Naive thymus-derived CD4-positive, alpha-beta T cell (primary cell): ENCODE measurements at regions of chr2 and their contacts with region 1.

Region 1: DNA sequence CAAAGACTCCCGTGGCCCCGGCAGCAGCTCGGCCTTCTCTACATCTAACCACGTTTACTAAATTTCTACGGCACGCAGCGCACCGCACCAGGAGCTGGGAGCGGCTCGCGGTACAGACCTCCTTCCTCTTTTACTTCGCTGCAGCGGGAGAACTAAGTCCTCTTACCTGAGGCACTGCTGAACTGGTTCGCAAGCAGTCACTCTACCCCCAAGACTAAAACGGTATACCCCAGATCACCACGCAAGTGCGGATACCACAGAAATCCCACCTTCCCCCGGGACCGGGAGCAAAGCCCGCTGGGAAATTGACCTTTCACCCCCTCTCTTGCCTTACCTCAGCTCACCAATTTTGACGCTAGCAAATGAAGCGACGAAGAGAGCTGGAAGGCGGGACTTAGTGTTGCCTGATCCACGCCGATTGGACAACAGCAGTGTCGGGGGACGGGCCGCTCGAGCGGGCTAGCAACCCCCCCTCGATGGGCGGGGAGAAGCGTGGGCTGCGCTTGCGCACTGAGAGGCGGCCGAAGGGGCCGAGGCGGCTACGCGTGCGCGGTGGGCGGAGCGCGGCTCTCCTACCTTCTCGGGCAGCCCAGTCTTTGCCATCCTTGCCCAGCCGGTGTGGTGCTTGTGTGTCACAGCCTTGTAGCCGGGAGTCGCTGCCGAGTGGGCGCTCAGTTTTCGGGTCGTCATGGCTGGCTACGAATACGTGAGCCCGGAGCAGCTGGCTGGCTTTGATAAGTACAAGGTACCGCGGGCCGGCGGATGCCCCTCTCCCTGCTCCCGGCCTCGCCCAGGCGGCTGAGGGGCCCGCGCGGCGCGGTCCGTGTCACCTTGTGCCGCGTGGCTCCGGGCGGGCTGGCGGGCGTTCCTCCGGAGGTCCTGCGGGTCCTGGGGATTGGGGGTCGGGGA is at the start of gene SELENOI:
- DNase-seq: peak; percentile 99 to 100 (median 99)
- ATAC-seq: peak; percentile 97
- H3K4me3 ChIP-seq: peak within 1 kb of the TSS; percentile 81
- H3K4me3 Mint-ChIP-seq: peak within 1 kb of the TSS; percentile 84 to 100 (median 98)
- H3K27ac ChIP-seq: peak within 1 kb of the TSS; percentile 88
- H3K27ac Mint-ChIP-seq: peak within 1 kb of the TSS; percentile 95 to 100 (median 99)
- H3K4me1 ChIP-seq: peaks cover 24 to 25% of the 10 kb centered on the region in 2 donors
- H3K4me1 Mint-ChIP-seq: peaks cover 28 to 62% (median 40%) of the 10 kb centered on the region in 7 donors
- H3K27me3 ChIP-seq: no peaks in the 10 kb centered on the region
- H3K27me3 Mint-ChIP-seq: no peaks in the 10 kb centered on the region
- total RNA-seq, gene SELENOI: 19.0 to 33.6 (median 22.4) TPM

Region 2: GRCh38 chr2:25673300-25674076 is 672.3 kb before region 1 on chr2 and contains the start of gene DTNB:
- CTCF ChIA-PET with region 1: no interaction called
- POLR2A ChIA-PET with region 1: no interaction called
- intact Hi-C with region 1: loop called (anchors 2 to 5 kb)
- DNase-seq: peak; percentile 68 to 82 (median 79)
- ATAC-seq: peak; percentile 89
- H3K4me3 ChIP-seq: peak within 1 kb of the TSS; percentile 94
- H3K4me3 Mint-ChIP-seq: peak within 1 kb of the TSS; percentile 84 to 90 (median 88)
- H3K27ac ChIP-seq: peak within 1 kb of the TSS; percentile 80
- H3K27ac Mint-ChIP-seq: peak within 1 kb of the TSS; percentile 74 to 92 (median 84)
- H3K4me1 ChIP-seq: peaks cover 12 to 15% of the 10 kb centered on the region in 2 donors
- H3K4me1 Mint-ChIP-seq: peaks cover 15 to 56% (median 37%) of the 10 kb centered on the region in 7 donors
- H3K27me3 ChIP-seq: no peaks in the 10 kb centered on the region
- H3K27me3 Mint-ChIP-seq: peaks cover 0 to 25% (median 0%) of the 10 kb centered on the region in 5 donors
- total RNA-seq, gene DTNB: 32.8 to 56.2 (median 33.8) TPM

Region 3: GRCh38 chr2:26184555-26185303 is 161.1 kb before region 1 on chr2:
- CTCF ChIA-PET with region 1: no interaction called
- POLR2A ChIA-PET with region 1: interaction called, 5 read pairs
- intact Hi-C with region 1: loop called in 1 of 2 experiments (anchors 1 kb)
- DNase-seq: peak; percentile 82 to 91 (median 88)
- ATAC-seq: peak; percentile 98
- H3K4me3 ChIP-seq: peak overlapping the region; percentile 68
- H3K4me3 Mint-ChIP-seq: peak overlapping the region; percentile 79 to 91 (median 85)
- H3K27ac ChIP-seq: peak overlapping the region; percentile 71
- H3K27ac Mint-ChIP-seq: peak overlapping the region in 7 of 9 donors; percentile 25 to 90 (median 67)
- H3K4me1 ChIP-seq: peaks cover 5 to 8% of the 10 kb centered on the region in 2 donors
- H3K4me1 Mint-ChIP-seq: peaks cover 6 to 30% (median 23%) of the 10 kb centered on the region in 7 donors
- H3K27me3 ChIP-seq: no peaks in the 10 kb centered on the region
- H3K27me3 Mint-ChIP-seq: peaks cover 11 to 23% (median 15%) of the 10 kb centered on the region in 5 donors

Region 4: DNA sequence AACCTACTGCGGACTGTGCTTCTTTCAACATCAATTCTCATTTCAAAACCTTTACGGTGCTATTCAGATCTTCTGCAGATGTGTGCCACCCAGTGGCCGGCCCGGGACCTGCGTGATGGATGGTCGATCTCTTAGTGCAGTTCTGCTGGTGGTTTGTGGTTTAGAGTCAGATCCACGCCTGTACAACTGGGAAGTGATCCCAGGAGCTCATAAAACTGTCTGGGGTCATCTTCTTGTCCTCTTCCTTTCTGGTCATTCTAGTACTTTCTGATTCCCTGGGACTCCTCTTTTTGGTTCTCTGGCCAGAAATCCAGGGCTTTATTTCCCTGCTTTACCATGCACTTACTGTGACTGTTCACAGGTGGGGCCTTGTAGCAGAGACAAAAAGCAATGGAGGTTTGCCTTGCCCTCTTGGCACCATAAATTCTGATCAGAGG is 15.7 kb before region 1 on chr2:
- CTCF ChIA-PET with region 1: interaction called, 4 read pairs
- POLR2A ChIA-PET with region 1: interaction called, 4 read pairs
- intact Hi-C with region 1: loop called in 1 of 2 experiments (anchors 1 kb)
- DNase-seq: peak; percentile 62 to 81 (median 76)
- ATAC-seq: peak; percentile 99
- H3K4me3 ChIP-seq: no peak overlapping the region
- H3K4me3 Mint-ChIP-seq: peak overlapping the region in 4 of 10 donors; percentile 6 to 41 (median 19)
- H3K27ac ChIP-seq: no peak overlapping the region
- H3K27ac Mint-ChIP-seq: peak overlapping the region in 3 of 9 donors; percentile 19 to 58 (median 25)
- H3K4me1 ChIP-seq: peaks cover 0 to 6% of the 10 kb centered on the region in 2 donors
- H3K4me1 Mint-ChIP-seq: peaks cover 3 to 19% (median 9%) of the 10 kb centered on the region in 7 donors
- H3K27me3 ChIP-seq: no peaks in the 10 kb centered on the region
- H3K27me3 Mint-ChIP-seq: peaks cover 0 to 4% (median 0%) of the 10 kb centered on the region in 5 donors

Region 5: GRCh38 chr2:26785431-26786206 is 439.8 kb after region 1 on chr2 and contains the start of gene CENPA:
- CTCF ChIA-PET with region 1: no interaction called
- POLR2A ChIA-PET with region 1: no interaction called
- intact Hi-C with region 1: loop called in 1 of 2 experiments (anchors 1 kb)
- DNase-seq: peak; percentile 86 to 98 (median 96)
- ATAC-seq: peak; percentile 100
- H3K4me3 ChIP-seq: peak within 1 kb of the TSS; percentile 78
- H3K4me3 Mint-ChIP-seq: peak within 1 kb of the TSS; percentile 81 to 97 (median 88)
- H3K27ac ChIP-seq: peak within 1 kb of the TSS; percentile 60
- H3K27ac Mint-ChIP-seq: peak within 1 kb of the TSS; percentile 65 to 97 (median 89)
- H3K4me1 ChIP-seq: peaks cover 0 to 4% of the 10 kb centered on the region in 2 donors
- H3K4me1 Mint-ChIP-seq: peaks cover 10 to 34% (median 11%) of the 10 kb centered on the region in 7 donors
- H3K27me3 ChIP-seq: no peaks in the 10 kb centered on the region
- H3K27me3 Mint-ChIP-seq: peaks cover 0 to 26% (median 24%) of the 10 kb centered on the region in 5 donors
- total RNA-seq, gene CENPA: 0.37 to 25.6 (median 0.73) TPM in 3 of 5 experiments, not detected in the others

Region 6: GRCh38 chr2:27217217-27218121 is 871.7 kb after region 1 on chr2 and contains the start of gene CAD:
- CTCF ChIA-PET with region 1: no interaction called
- POLR2A ChIA-PET with region 1: no interaction called
- intact Hi-C with region 1: loop called (anchors 2 to 5 kb)
- DNase-seq: peak; percentile 71 to 90 (median 80)
- ATAC-seq: peak; percentile 87
- H3K4me3 ChIP-seq: peak within 1 kb of the TSS; percentile 68
- H3K4me3 Mint-ChIP-seq: peak within 1 kb of the TSS; percentile 90 to 98 (median 96)
- H3K27ac ChIP-seq: peak within 1 kb of the TSS; percentile 85
- H3K27ac Mint-ChIP-seq: peak within 1 kb of the TSS; percentile 86 to 96 (median 94)
- H3K4me1 ChIP-seq: peaks cover 19 to 24% of the 10 kb centered on the region in 2 donors
- H3K4me1 Mint-ChIP-seq: peaks cover 26 to 52% (median 45%) of the 10 kb centered on the region in 7 donors
- H3K27me3 ChIP-seq: no peaks in the 10 kb centered on the region
- H3K27me3 Mint-ChIP-seq: no peaks in the 10 kb centered on the region
- total RNA-seq, gene CAD: 34.4 to 65.7 (median 45.4) TPM